Right lobe of liver (tissue), 6 donors: ENCODE measurements at regions of chr15 and their contacts with region 1.

Region 1: DNA sequence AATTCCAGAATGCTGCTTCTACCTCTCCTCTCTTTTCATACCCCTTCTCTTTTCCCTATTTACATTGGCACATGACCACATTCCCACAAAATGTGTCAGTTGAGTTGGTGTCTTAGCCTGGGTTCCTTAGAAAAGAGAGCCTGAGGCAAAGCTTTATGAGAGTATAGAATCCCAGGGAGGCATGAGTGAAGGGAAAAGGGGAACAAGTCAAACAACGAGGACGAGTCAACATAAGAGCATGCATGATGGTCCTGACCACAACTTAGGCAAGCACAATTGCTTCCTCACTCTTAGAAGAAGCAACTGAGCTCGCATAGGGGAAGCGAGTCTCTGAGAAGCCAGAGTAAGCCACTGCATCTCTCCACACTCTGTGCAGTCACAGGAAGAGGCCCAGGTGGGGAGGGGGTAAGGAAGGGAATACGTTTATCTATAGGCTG is 15.4 kb upstream of the ZNF774 start:
- DNase-seq: no peak
- ATAC-seq: peak; percentile 58 to 85 (median 70)
- H3K4me3 ChIP-seq: no peak overlapping the region
- H3K27ac ChIP-seq: no peak overlapping the region
- H3K4me1 ChIP-seq: no peaks in the 10 kb centered on the region
- H3K27me3 ChIP-seq: no peaks in the 10 kb centered on the region
- CTCF ChIP-seq: no peak
- POLR2A ChIP-seq: no peak

Region 2: GRCh38 chr15:90400406-90401314 is 63.9 kb after region 1 on chr15:
- intact Hi-C with region 1: no loop called
- DNase-seq: no peak
- ATAC-seq: peak; percentile 95 to 98 (median 96)
- H3K4me3 ChIP-seq: peak overlapping the region in 1 of 3 donors; percentile 5
- H3K27ac ChIP-seq: peak overlapping the region; percentile 63 to 68 (median 66)
- H3K4me1 ChIP-seq: peaks cover 0 to 17% (median 0%) of the 10 kb centered on the region in 4 donors
- H3K27me3 ChIP-seq: no peaks in the 10 kb centered on the region
- CTCF ChIP-seq: no peak
- POLR2A ChIP-seq: no peak

Region 3: DNA sequence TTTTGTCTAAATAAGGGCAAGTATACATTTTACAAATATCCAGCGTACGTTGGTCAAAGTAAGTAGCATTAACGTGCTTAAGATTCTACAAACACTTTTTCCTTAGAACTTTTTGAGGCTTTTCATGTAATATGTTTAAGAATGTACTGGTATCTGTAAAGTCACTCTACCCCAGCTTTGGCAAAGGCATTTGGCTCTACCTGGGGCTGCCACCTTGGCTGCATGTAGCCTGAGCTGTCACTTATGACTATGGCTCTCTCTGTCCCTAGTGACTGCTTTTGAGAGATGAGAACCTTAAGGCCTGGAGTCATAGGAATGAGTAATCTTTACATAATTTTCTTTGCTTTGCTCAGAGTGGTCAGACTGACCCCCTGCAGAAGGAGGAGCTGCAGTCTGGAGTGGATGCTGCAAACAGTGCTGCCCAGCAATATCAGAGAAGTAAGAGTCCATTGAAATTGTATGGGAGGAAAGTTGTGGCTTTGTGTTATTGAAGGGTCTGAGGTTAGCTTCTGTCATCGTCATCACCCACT is 112.5 kb after region 1 on chr15:
- intact Hi-C with region 1: no loop called
- DNase-seq: no peak
- ATAC-seq: no peak
- H3K4me3 ChIP-seq: no peak overlapping the region
- H3K27ac ChIP-seq: no peak overlapping the region
- H3K4me1 ChIP-seq: no peaks in the 10 kb centered on the region
- H3K27me3 ChIP-seq: no peaks in the 10 kb centered on the region
- CTCF ChIP-seq: no peak
- POLR2A ChIP-seq: no peak

Region 4: DNA sequence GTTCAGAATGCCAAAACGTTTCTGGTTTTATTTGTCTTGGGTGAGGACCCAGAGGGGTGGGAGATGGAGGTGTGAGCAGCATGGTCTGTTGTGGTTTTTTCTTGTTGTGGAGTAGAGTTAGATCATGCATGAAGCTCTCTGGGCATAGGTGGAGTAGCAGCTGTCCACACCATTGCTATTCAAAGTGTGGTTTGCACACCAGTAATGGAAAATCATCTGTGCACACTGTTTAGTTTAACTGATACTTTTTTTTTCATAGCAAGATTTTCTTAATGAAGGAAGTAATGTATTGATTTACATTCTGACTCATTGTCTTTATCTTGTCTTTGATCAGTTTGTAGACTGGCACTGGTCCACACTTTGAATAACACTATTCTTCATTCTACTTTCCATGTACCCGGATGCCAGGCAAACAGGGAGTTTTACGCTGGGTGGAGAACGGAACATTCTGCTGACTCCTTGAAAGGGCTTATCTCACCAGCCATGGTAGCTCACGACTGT is 142.3 kb after region 1 on chr15:
- intact Hi-C with region 1: loop called in 1 of 2 experiments (anchors 10 kb)
- DNase-seq: no peak
- ATAC-seq: peak; percentile 38 to 72 (median 46)
- H3K4me3 ChIP-seq: no peak overlapping the region
- H3K27ac ChIP-seq: no peak overlapping the region
- H3K4me1 ChIP-seq: peaks cover 0 to 11% (median 0%) of the 10 kb centered on the region in 4 donors
- H3K27me3 ChIP-seq: no peaks in the 10 kb centered on the region
- CTCF ChIP-seq: no peak
- POLR2A ChIP-seq: no peak